ENCODE measurements at regions of chr4 and their contacts with region 1.

Region 1: DNA sequence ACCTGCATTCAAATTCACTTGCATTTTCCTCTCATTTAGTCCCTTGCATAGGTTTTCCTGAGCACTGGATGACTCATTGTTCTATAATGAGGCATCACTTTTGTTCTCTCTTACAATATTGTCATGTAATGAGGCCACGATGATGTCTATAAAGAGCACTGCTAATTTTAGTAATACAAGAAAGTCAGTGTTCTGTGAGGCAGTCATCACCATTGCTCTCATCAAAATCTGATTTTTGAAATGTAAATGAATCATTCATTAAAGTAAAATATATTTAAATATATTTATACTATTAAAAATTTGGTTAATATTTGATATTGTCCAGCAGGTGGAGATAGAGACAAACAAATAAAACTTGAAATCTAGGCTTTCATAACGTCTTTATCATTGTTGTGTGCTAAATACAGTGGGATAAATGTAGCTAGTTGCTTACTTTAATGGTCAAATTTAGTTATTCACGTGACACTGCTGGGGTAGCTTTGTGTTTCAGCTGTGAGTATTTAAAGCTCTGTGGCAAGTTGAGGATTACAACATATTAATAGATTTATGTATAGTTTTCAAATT is 15.4 kb downstream of the HMGB2 start:
- DNase-seq: no peak
- H3K4me3 ChIP-seq: no peak overlapping the region
- H3K27ac ChIP-seq: no peak overlapping the region
- H3K4me1 ChIP-seq: peaks cover 0 to 7% (median 4%) of the 10 kb centered on the region in 4 donors
- H3K27me3 ChIP-seq: no peaks in the 10 kb centered on the region
- CTCF ChIP-seq: peak; percentile 16 to 48 (median 48)
- EP300 ChIP-seq: no peak
- POLR2A ChIP-seq: no peak

Region 2: DNA sequence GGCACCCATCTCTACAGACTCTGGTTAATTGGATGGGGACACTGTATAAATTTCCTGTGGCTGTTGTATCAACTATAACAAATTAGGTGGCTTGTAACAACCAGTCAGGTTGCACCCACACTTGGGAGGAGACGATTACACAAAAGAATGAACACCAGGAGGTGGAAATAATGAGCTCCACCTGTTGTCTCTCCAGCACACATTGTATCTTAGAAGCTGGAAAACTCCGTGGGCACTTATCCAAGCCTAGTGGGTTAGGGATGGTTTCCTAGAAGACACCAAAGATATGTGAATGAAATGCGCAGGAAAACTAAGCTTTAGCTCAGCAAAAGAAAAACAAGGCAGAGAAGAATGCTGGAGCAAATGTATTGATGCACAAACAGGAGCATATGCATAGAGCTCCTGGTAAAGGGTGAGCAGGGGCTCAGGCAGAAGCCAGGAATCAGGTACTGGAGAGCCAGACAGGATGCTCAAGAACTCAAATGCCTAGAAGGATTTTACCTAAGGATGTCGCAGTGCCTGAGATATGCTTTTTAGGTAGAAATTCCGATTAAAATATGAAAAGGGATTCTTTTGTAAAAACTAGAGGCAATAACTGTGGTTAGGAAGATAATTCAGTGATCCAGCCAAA is 1393.9 kb before region 1 on chr4:
- intact Hi-C with region 1: no loop called
- DNase-seq: no peak
- H3K4me3 ChIP-seq: no peak overlapping the region
- H3K27ac ChIP-seq: no peak overlapping the region
- H3K4me1 ChIP-seq: no peaks in the 10 kb centered on the region
- H3K27me3 ChIP-seq: peaks cover 0 to 7% (median 0%) of the 10 kb centered on the region in 4 donors
- CTCF ChIP-seq: no peak
- EP300 ChIP-seq: no peak
- POLR2A ChIP-seq: no peak

Region 3: GRCh38 chr4:173398220-173398619 is 79.5 kb after region 1 on chr4:
- intact Hi-C with region 1: no loop called
- DNase-seq: no peak
- H3K4me3 ChIP-seq: peak overlapping the region in 1 of 4 donors; percentile 13
- H3K27ac ChIP-seq: peak overlapping the region in 3 of 4 donors; percentile 25 to 60 (median 44)
- H3K4me1 ChIP-seq: peaks cover 0 to 29% (median 25%) of the 10 kb centered on the region in 4 donors
- H3K27me3 ChIP-seq: no peaks in the 10 kb centered on the region
- CTCF ChIP-seq: no peak
- EP300 ChIP-seq: no peak
- POLR2A ChIP-seq: no peak

Region 4: DNA sequence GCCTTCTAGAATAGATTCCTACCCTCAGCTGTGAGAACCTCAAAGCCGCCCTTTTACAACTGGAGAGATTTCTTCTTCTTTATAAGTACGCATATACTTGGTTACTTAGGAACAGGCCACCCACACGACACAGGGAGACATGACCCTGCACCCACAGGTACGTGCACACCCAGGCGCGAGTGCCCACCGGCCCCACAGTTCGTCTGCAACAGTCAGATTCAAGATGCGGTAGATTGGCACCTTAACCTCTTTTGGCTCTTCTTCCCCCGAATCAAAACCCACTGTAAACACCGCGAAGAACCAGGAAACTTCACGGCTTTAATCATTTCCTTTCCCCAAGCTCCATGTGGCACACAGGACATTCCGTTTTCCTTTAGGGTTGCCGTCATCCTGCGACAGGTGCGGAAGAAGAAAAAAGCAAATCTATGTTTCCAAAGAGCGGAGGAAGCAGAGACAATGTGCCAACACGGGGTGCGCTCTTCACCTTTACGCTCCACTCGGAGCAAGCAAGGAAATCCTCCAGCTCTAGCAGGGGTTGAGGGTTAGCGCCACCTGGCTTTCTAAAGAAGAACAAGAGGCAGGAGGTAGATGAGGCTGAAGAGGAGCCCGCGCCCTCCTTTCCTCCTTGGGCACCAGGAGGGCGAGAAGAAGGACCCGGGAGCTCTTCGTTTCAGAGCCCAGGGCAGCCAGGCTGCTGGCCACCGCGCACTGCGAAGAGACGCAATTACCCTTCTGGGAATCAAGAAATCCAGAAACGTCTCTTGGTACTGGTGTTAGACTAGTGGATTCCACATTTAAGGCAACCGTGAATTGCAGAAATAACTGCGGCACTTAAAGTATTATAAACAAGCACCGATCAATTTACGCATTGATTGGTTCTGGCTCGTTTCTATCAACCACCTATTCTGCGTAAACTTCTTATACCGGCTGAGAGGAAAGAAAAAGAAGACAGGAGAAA is 175.6 kb after region 1 on chr4:
- intact Hi-C with region 1: loop called (anchors 2 kb)
- DNase-seq: peak; percentile 93
- H3K4me3 ChIP-seq: peak overlapping the region; percentile 46 to 56 (median 53)
- H3K27ac ChIP-seq: peak overlapping the region in 2 of 4 donors; percentile 16 to 33
- H3K4me1 ChIP-seq: peaks cover 12 to 38% (median 35%) of the 10 kb centered on the region in 4 donors
- H3K27me3 ChIP-seq: no peaks in the 10 kb centered on the region
- CTCF ChIP-seq: peak; percentile 74 to 86 (median 80)
- EP300 ChIP-seq: no peak
- POLR2A ChIP-seq: no peak